Posterior vena cava (tissue), 2 donors: ENCODE measurements at regions of chr13 and their contacts with region 1.

Region 1: GRCh38 chr13:102452831-102453230 is 51.0 kb upstream of the FGF14 start:
- DNase-seq: no peak

Region 2: DNA sequence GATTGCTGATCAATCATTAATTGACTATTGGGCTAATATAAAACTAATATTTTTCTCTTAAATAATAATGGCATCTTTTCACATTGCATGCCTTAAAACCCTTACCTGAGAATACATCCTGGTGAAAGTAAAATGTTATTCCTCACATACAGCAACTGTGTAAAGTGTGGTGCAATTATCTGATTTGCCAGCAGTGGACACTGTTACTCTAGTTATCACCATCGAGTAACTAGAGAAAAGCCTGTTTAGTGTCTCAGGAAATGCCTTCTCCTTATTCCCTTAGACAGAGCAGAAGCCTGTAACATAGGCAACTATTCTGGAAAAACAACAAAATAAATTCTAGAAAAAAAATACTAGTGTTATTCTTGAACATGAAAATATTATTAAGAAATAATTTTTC is 510.8 kb before region 1 on chr13:
- intact Hi-C with region 1: loop called (anchors 10 kb)
- DNase-seq: no peak

Region 3: DNA sequence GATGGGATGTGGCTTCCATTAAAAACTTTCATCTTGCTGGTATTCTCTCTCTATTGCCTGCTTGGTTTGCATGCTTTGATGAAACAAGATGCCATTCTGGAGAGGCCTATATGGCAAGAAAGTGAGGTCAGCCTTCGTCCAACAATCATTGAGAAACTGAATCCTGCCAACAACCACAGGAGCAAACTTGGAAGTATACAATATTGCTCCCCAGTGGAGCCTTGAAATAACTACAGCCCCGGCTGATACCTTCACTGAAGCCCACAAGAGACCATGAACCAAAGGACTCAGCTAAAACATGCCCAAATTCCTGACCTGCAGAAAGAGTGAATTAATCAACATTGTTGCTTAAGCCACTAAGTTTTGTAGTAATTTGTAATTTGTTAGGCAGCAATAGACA is 31.5 kb after region 1 on chr13:
- intact Hi-C with region 1: no loop called
- DNase-seq: no peak

Region 4: DNA sequence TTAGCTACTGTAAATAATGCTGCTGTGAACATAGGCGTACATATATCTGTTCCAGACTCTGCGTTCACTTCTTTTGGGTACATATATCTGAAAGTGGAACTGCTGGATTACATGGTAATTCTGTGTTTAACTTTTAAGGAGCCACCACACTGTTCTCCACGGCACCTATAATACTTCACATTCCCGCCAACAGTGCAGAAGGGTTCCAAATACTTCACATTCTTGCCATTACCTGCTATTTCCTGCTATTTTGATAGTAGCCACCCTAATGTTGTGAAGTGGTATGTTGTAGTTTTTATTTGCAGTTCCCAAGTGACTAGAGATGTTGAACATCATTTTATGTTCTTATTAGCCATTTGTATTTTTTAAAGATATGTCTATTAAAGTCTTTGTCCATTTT is 990.8 kb after region 1 on chr13:
- intact Hi-C with region 1: loop called in 1 of 2 experiments (anchors 5 kb)
- DNase-seq: no peak